Mammary epithelial cell (primary cell): ENCODE measurements at regions of chr9 and their contacts with region 1.

Region 1: GRCh38 chr9:122453677-122454135 is 24.0 kb downstream of the OR1J1 start:
- DNase-seq: peak; percentile 3
- H3K4me3 ChIP-seq: no peak overlapping the region
- H3K27ac ChIP-seq: no peak overlapping the region
- H3K4me1 ChIP-seq: peaks cover 4% of the 10 kb centered on the region
- H3K27me3 ChIP-seq: no peaks in the 10 kb centered on the region
- CTCF ChIP-seq: no peak

Region 2: GRCh38 chr9:122099271-122099869 is 354.3 kb before region 1 on chr9:
- CTCF ChIA-PET with region 1: no interaction called
- dilution Hi-C with region 1: no loop called
- in situ Hi-C with region 1: no loop called
- intact Hi-C with region 1: loop called (anchors 1 kb)
- DNase-seq: peak; percentile 54
- H3K4me3 ChIP-seq: peak overlapping the region in 2 of 3 experiments; percentile 1 to 17
- H3K27ac ChIP-seq: no peak overlapping the region
- H3K4me1 ChIP-seq: no peaks in the 10 kb centered on the region
- H3K27me3 ChIP-seq: no peaks in the 10 kb centered on the region
- CTCF ChIP-seq: peak; percentile 76 to 81

Region 3: GRCh38 chr9:122264360-122265148 is 189.2 kb before region 1 on chr9 and contains the starts of genes MRRF and RBM18:
- CTCF ChIA-PET with region 1: no interaction called
- dilution Hi-C with region 1: no loop called
- in situ Hi-C with region 1: no loop called
- intact Hi-C with region 1: loop called (anchors 1 kb)
- DNase-seq: peak; percentile 91
- H3K4me3 ChIP-seq: peak within 1 kb of the TSS; percentile 72 to 80 (median 77)
- H3K27ac ChIP-seq: peak within 1 kb of the TSS; percentile 95
- H3K4me1 ChIP-seq: peaks cover 28% of the 10 kb centered on the region
- H3K27me3 ChIP-seq: no peaks in the 10 kb centered on the region
- CTCF ChIP-seq: no peak
- total RNA-seq, gene MRRF: 43.0 to 52.0 TPM
- total RNA-seq, gene RBM18: 14.3 to 39.7 TPM

Region 4: DNA sequence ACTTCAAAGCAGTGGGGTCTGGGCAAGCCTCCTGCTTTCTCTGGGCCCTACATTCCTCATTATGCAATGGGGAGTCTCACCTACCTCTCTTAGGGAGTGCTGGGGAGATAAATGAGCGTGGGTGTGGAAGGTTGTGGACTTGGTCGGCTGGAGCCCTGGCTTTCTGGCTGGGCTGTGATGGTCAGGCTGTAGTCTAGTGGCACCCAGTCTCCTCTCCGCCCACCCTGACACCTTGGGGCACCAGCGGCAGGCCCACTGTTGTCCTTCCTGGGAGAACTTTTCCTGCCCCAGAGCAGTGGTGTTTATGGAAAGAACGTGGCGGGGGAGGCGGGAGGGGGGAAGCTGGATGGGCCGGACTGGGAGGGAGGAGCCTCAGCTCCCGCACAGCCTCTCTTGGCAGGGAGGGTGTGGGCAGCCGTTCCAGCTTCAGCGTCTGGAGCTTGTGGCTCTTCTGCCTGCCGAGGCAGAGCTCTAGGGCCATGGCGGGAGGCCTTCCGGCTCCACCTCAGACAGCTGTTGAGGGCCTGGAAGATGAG is 78.8 kb before region 1 on chr9:
- CTCF ChIA-PET with region 1: no interaction called
- dilution Hi-C with region 1: no loop called
- in situ Hi-C with region 1: no loop called
- intact Hi-C with region 1: loop called (anchors 1 kb)
- DNase-seq: no peak
- H3K4me3 ChIP-seq: no peak overlapping the region
- H3K27ac ChIP-seq: no peak overlapping the region
- H3K4me1 ChIP-seq: peaks cover 26% of the 10 kb centered on the region
- H3K27me3 ChIP-seq: no peaks in the 10 kb centered on the region
- CTCF ChIP-seq: no peak

Region 5: GRCh38 chr9:122402403-122402871 is 51.3 kb before region 1 on chr9:
- CTCF ChIA-PET with region 1: no interaction called
- dilution Hi-C with region 1: loop called (anchors 5 kb)
- in situ Hi-C with region 1: no loop called
- intact Hi-C with region 1: loop called (anchors 5 kb)
- DNase-seq: peak; percentile 92
- H3K4me3 ChIP-seq: no peak overlapping the region
- H3K27ac ChIP-seq: peak overlapping the region; percentile 52
- H3K4me1 ChIP-seq: peaks cover 12% of the 10 kb centered on the region
- H3K27me3 ChIP-seq: no peaks in the 10 kb centered on the region
- CTCF ChIP-seq: no peak

Region 6: DNA sequence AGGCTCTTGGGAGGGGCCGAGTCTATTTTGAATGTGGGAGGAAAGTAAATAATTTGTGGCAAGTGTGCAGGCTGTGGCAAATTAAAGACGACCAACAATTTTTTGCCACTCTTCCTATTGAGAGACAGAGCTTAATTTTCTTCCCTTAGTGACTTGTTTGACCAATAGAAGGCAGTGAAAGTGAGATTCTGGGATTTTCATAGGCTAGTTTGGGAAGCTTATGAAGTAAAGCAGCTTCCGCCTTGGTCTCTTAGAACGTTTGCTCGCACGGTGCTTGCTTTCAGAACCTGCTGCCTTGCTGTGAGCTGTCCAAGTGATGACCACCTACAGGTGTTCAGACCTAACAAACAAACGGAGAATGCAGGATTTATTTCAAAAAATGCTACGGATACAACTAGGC is 92.5 kb after region 1 on chr9:
- CTCF ChIA-PET with region 1: no interaction called
- dilution Hi-C with region 1: no loop called
- in situ Hi-C with region 1: no loop called
- intact Hi-C with region 1: no loop called
- DNase-seq: no peak
- H3K4me3 ChIP-seq: no peak overlapping the region
- H3K27ac ChIP-seq: no peak overlapping the region
- H3K4me1 ChIP-seq: peaks cover 4% of the 10 kb centered on the region
- H3K27me3 ChIP-seq: no peaks in the 10 kb centered on the region
- CTCF ChIP-seq: no peak